OCI-LY7 (cell line): ENCODE measurements at regions of chr3 and their contacts with region 1.

Region 1: DNA sequence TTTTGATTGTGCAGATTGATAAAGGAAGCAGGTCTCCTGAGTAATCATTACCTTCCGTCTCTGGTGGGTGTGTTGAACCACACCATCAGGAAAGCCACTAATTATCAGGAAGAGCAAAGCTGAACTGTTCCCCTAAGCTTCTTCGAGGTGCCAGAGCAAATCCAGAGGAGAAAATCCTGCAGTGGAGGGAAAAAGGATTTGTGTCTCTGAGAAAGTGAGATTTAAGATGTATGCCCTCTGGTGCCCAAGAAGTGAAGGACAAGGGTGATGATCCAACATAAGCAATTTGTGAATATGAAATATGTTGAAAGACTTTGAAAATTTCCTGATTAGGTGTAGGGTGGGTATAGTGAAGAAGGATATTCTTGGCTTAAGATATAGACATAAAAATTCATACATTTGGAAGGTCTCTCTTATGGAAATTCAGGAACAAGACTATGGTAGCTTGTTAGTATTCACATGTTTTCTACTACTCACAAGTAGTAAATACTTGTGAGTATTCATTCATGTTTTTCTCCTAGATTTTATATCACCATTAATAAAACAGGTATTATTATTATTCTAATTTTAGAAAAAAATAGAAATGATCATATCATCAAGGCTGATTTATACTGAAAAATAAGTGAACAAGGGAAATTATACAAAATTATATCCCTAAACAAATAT is 34.8 kb downstream of the COMMD2 start:
- DNase-seq: peak; percentile 39
- H3K4me3 ChIP-seq: no peak overlapping the region
- H3K27ac ChIP-seq: no peak overlapping the region
- H3K4me1 ChIP-seq: no peaks in the 10 kb centered on the region
- CTCF ChIP-seq: peak; percentile 80

Region 2: DNA sequence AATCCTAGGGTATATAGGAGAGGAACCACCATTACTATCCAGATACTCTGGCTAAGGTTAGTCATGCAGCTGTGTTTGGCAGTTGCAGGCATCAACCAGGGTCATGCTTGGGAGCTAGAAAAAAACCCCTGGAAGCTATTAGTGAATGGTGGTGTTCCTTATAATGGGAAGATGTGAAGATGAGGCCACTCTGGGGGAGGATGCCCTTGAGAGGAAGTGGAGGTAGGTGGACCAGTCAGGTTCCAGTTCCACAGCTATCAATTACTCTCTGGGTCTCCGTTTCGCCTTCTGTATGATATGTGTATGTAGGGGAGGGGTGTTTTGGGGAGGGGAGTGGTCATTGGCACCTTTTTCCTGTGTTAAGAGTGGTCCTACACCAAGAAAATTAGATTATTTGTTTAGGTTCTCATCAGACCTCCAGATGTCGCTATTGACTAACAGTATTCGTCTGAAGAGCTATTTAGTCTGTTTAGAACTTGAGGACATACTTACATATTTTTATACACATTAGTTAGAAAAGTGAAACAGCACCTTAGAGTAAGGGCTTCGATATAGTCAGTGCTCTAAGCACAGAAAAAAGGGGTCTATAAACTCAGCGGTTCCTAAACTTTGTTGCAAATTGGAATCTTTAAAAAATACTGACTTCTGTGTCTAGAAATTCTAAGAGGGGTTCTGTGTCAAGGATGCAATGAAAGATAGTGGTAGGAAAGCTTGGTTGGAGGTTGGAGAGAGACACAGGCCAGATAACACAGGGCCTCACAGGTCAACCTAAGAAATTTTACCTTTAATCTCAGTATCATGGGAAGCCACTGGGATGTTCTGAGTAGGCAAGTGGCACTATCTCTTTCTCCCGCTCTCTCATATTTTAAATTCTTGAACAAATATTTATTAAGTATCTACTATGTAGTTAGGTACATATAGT is 597.2 kb before region 1 on chr3:
- CTCF ChIA-PET with region 1: no interaction called
- POLR2A ChIA-PET with region 1: no interaction called
- intact Hi-C with region 1: loop called (anchors 2 kb)
- DNase-seq: peak; percentile 81
- H3K4me3 ChIP-seq: no peak overlapping the region
- H3K27ac ChIP-seq: no peak overlapping the region
- H3K4me1 ChIP-seq: peaks cover 4% of the 10 kb centered on the region
- CTCF ChIP-seq: peak; percentile 94

Region 3: GRCh38 chr3:149188494-149188893 is 529.0 kb before region 1 on chr3:
- CTCF ChIA-PET with region 1: no interaction called
- POLR2A ChIA-PET with region 1: no interaction called
- intact Hi-C with region 1: no loop called
- DNase-seq: no peak
- H3K4me3 ChIP-seq: no peak overlapping the region
- H3K27ac ChIP-seq: no peak overlapping the region
- H3K4me1 ChIP-seq: no peaks in the 10 kb centered on the region
- CTCF ChIP-seq: no peak

Region 4: DNA sequence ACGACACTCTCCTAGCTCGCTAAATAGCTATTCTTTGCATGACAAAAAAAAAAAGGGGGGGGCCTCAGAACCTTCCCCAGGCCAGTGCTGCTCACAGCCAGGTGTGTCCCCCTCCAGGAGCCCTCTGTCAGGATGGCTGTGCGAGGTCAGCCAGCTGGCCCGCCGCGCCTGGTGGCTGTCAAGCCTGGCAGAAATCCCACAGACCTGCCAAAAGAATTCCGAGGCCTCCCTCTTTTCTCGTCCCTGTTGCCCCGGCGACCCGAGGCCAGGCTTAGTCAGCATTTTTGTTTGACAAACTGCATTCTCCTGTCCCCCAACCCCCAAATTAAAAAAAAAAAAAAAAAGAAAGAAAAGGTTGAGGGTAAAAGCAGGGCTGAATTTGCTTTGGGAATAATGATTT is 181.1 kb before region 1 on chr3:
- CTCF ChIA-PET with region 1: no interaction called
- POLR2A ChIA-PET with region 1: no interaction called
- intact Hi-C with region 1: loop called (anchors 10 kb)
- DNase-seq: no peak
- H3K4me3 ChIP-seq: no peak overlapping the region
- H3K27ac ChIP-seq: no peak overlapping the region
- H3K4me1 ChIP-seq: no peaks in the 10 kb centered on the region
- CTCF ChIP-seq: no peak